Activated CD4-positive, alpha-beta memory T cell treated with anti-CD3 and anti-CD28 coated beads for 36 hours (primary cell): ENCODE measurements at regions of chr12 and their contacts with region 1.

Region 1: DNA sequence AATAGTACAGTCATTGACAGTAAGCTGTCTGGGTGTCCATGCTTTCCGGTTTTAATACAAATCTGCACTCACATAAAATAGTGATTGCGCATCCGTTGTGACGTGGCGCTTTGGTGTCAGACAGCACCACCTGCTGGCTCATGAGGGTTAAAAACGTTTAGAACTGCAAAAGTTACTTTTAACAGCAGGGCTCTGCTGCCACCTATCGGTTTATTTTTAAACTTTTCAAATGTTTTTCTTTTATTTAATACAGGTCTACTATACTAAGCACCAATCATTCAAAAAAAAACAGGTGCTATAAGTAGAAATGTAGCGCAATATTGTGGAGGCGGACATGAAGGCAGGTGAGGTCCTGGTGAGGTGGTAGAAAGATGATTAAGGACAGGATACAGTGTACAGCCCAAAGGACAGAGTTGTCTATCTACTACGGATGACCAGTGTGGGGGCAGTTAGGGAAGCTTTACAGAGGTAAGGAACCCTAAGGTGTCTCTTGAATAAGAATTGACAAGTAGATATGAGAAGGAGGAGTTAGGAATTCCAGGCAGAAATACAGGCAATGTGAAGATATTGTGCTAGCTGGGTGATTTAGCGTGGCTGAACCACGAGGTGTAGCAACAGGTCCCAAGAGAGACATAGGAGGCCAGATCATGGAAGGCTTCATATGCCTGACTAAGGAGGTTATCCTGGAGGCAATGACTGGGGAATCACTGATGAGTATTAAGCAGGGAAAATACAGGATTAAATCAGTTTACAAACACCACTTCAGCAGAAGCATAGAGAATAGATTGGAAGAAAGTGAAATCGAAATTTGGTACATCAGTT is 91.5 kb upstream of the PRB2 start:
- DNase-seq: peak; percentile 87
- H3K4me3 Mint-ChIP-seq: no peak overlapping the region
- H3K27ac Mint-ChIP-seq: no peak overlapping the region
- H3K4me1 Mint-ChIP-seq: peaks cover 2% of the 10 kb centered on the region
- H3K27me3 Mint-ChIP-seq: peaks cover 7% of the 10 kb centered on the region

Region 2: DNA sequence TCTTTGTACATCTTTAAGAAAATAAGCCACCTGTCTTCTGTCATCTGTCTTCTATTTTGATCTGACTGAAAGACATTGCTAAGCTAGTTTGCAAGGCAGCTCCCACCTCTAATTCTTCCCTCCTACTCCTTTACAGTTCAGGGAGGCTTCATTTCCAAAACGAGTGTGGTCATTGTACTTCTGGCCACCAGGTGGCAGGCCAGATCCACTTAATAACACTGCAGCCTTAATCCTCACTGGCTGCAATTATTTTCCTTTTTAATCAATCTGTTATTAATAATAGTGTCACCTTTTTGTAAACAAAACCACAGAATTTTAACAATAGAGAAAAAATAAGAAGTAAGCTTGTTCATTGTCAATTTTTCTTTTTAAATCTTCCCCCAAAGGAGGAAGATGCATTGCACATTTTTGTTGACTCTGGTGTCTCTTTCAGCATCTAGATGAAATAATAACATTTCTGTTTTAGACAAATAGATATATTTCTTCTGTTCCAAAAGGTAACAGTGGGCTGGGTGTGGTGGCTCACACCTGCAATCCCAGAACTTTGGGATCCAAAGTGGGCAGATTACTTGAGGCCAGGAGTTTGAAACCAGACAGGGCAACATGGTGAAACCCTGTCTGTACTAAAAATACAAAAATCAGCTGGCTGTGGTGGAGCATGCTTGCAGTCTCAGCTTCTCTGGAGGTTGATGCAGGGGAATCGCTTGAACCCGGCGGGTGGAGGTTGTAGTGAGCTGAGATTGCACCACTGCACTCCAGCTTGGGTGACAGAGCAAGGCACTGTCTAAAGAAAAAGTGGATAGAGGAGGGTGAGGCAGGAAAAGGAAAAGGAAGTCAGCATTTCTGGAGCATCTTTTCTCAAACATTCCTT is 1250.8 kb before region 1 on chr12:
- CTCF ChIA-PET with region 1: no interaction called
- POLR2A ChIA-PET with region 1: no interaction called
- intact Hi-C with region 1: loop called (anchors 5 kb)
- DNase-seq: peak; percentile 47
- H3K4me3 Mint-ChIP-seq: no peak overlapping the region
- H3K27ac Mint-ChIP-seq: no peak overlapping the region
- H3K4me1 Mint-ChIP-seq: no peaks in the 10 kb centered on the region
- H3K27me3 Mint-ChIP-seq: peaks cover 3% of the 10 kb centered on the region

Region 3: DNA sequence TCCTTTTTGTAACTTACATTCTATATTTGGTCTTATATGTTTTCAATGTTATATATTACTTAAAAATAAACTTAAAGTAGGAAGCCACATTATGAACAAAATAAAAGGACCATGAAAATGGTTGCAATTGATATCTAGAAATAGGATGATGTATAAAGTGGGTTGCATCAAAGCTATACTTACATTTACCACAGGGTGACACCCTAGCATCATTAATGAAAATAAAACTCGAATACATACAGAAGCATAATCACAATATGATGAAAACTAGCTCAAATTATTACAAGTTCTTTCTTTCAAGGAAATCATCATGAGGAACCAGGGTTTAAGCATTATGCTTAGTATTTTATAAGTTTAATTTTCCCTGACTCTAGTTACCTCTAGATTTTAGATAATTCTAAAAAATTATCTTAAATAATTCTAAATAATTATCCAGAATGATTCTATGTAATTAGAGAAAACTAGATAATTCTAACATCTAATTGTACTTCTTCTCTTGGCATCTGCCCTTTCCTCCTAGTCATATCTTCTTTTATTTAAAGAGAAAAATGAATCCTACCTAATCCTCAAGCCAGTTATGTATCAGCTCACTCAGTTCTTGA is 715.6 kb before region 1 on chr12:
- CTCF ChIA-PET with region 1: interaction called, 98 read pairs
- POLR2A ChIA-PET with region 1: no interaction called
- intact Hi-C with region 1: loop called (anchors 1 kb)
- DNase-seq: no peak
- H3K4me3 Mint-ChIP-seq: no peak overlapping the region
- H3K27ac Mint-ChIP-seq: no peak overlapping the region
- H3K4me1 Mint-ChIP-seq: no peaks in the 10 kb centered on the region
- H3K27me3 Mint-ChIP-seq: peaks cover 28% of the 10 kb centered on the region

Region 4: GRCh38 chr12:11202811-11203210 is 284.0 kb before region 1 on chr12:
- CTCF ChIA-PET with region 1: interaction called, 13 read pairs
- POLR2A ChIA-PET with region 1: no interaction called
- intact Hi-C with region 1: no loop called
- DNase-seq: no peak
- H3K4me3 Mint-ChIP-seq: no peak overlapping the region
- H3K27ac Mint-ChIP-seq: no peak overlapping the region
- H3K4me1 Mint-ChIP-seq: no peaks in the 10 kb centered on the region
- H3K27me3 Mint-ChIP-seq: no peaks in the 10 kb centered on the region

Region 5: GRCh38 chr12:11228296-11228879 is 258.4 kb before region 1 on chr12:
- CTCF ChIA-PET with region 1: interaction called, 46 read pairs
- POLR2A ChIA-PET with region 1: no interaction called
- intact Hi-C with region 1: loop called (anchors 1 kb)
- DNase-seq: peak; percentile 52
- H3K4me3 Mint-ChIP-seq: no peak overlapping the region
- H3K27ac Mint-ChIP-seq: no peak overlapping the region
- H3K4me1 Mint-ChIP-seq: no peaks in the 10 kb centered on the region
- H3K27me3 Mint-ChIP-seq: no peaks in the 10 kb centered on the region

Region 6: GRCh38 chr12:11576104-11576503 is 89.3 kb after region 1 on chr12:
- CTCF ChIA-PET with region 1: no interaction called
- POLR2A ChIA-PET with region 1: no interaction called
- intact Hi-C with region 1: no loop called
- DNase-seq: peak; percentile 73
- H3K4me3 Mint-ChIP-seq: no peak overlapping the region
- H3K27ac Mint-ChIP-seq: no peak overlapping the region
- H3K4me1 Mint-ChIP-seq: peaks cover 24% of the 10 kb centered on the region
- H3K27me3 Mint-ChIP-seq: no peaks in the 10 kb centered on the region